CD8-positive, alpha-beta T cell (primary cell): ENCODE measurements at regions of chr2 and their contacts with region 1.

Region 1: GRCh38 chr2:203014456-203015199 is at the start of gene NBEAL1:
- DNase-seq: peak; percentile 92 to 99 (median 95)
- ATAC-seq: peak; percentile 90
- H3K4me3 ChIP-seq: peak within 1 kb of the TSS; percentile 77 to 97
- H3K4me3 Mint-ChIP-seq: peak within 1 kb of the TSS; percentile 88
- H3K27ac ChIP-seq: peak within 1 kb of the TSS; percentile 86 to 89
- H3K27ac Mint-ChIP-seq: peak within 1 kb of the TSS; percentile 92
- H3K4me1 ChIP-seq: peaks cover 37% of the 10 kb centered on the region
- H3K4me1 Mint-ChIP-seq: peaks cover 46% of the 10 kb centered on the region
- H3K27me3 ChIP-seq: no peaks in the 10 kb centered on the region
- H3K27me3 Mint-ChIP-seq: no peaks in the 10 kb centered on the region
- CTCF ChIP-seq: no peak
- total RNA-seq, gene NBEAL1: 11.2 to 13.2 TPM

Region 2: DNA sequence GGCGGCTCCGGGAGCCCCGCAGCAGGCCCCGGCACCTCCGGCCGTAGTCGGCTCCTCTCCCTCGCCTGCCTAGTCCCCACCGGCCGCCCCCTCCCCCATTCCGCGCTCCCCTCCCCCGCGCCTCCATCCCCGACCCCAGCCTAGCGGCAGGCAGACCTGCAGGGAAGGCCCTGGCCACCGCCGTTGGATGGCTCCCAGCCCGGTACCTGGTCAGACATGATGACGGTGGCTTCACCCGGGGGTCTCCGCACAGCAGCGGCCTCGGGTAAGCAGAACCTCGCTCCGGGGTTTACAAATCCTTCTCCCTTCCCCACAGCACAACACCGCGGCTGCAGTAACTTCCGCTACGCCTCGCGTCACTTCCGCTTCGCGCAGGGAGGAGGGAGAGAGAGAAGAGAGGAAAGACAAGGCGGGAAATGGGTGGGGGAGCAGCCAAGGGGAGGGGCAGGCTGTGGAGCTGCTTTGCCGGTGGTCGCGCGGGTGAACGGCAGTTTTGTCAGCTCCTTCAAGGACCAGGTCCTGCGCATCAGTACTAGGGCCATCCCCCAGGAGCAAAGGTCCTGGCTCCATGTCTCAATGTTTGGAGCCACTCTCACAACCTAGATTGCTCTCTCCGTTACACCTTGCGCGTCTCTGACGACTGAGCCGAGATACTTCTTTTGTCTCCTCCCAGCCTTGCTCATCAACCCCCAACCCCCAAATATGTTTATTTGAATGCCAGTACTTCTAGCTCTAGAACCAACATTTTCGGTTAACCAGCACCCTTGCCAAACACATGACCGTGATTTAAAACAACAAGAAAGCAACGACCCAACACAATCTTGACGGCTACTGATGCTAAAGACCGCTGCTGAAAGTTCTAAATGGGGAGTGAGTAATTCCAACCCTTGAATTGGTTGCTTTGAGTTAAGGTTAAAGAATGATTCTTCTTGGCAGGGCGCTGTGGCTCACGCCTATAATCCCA is 776.1 kb before region 1 on chr2 and contains the start of gene SUMO1:
- CTCF ChIA-PET with region 1: no interaction called
- POLR2A ChIA-PET with region 1: no interaction called
- intact Hi-C with region 1: loop called (anchors 2 to 10 kb)
- DNase-seq: peak; percentile 79 to 95 (median 92)
- ATAC-seq: peak; percentile 93
- H3K4me3 ChIP-seq: peak within 1 kb of the TSS; percentile 82 to 83
- H3K4me3 Mint-ChIP-seq: peak within 1 kb of the TSS; percentile 99
- H3K27ac ChIP-seq: peak within 1 kb of the TSS; percentile 82
- H3K27ac Mint-ChIP-seq: peak within 1 kb of the TSS; percentile 99
- H3K4me1 ChIP-seq: peaks cover 15% of the 10 kb centered on the region
- H3K4me1 Mint-ChIP-seq: peaks cover 43% of the 10 kb centered on the region
- H3K27me3 ChIP-seq: no peaks in the 10 kb centered on the region
- H3K27me3 Mint-ChIP-seq: no peaks in the 10 kb centered on the region
- CTCF ChIP-seq: no peak
- total RNA-seq, gene SUMO1: 86.1 to 87.4 TPM

Region 3: GRCh38 chr2:202494300-202495229 is 520.1 kb before region 1 on chr2:
- CTCF ChIA-PET with region 1: no interaction called
- POLR2A ChIA-PET with region 1: no interaction called
- intact Hi-C with region 1: no loop called
- DNase-seq: no peak
- ATAC-seq: no peak
- H3K4me3 ChIP-seq: no peak overlapping the region
- H3K4me3 Mint-ChIP-seq: no peak overlapping the region
- H3K27ac ChIP-seq: no peak overlapping the region
- H3K27ac Mint-ChIP-seq: no peak overlapping the region
- H3K4me1 ChIP-seq: no peaks in the 10 kb centered on the region
- H3K4me1 Mint-ChIP-seq: no peaks in the 10 kb centered on the region
- H3K27me3 ChIP-seq: no peaks in the 10 kb centered on the region
- H3K27me3 Mint-ChIP-seq: no peaks in the 10 kb centered on the region
- CTCF ChIP-seq: no peak